ENCODE measurements at regions of chrX and their contacts with region 1.

Region 1: DNA sequence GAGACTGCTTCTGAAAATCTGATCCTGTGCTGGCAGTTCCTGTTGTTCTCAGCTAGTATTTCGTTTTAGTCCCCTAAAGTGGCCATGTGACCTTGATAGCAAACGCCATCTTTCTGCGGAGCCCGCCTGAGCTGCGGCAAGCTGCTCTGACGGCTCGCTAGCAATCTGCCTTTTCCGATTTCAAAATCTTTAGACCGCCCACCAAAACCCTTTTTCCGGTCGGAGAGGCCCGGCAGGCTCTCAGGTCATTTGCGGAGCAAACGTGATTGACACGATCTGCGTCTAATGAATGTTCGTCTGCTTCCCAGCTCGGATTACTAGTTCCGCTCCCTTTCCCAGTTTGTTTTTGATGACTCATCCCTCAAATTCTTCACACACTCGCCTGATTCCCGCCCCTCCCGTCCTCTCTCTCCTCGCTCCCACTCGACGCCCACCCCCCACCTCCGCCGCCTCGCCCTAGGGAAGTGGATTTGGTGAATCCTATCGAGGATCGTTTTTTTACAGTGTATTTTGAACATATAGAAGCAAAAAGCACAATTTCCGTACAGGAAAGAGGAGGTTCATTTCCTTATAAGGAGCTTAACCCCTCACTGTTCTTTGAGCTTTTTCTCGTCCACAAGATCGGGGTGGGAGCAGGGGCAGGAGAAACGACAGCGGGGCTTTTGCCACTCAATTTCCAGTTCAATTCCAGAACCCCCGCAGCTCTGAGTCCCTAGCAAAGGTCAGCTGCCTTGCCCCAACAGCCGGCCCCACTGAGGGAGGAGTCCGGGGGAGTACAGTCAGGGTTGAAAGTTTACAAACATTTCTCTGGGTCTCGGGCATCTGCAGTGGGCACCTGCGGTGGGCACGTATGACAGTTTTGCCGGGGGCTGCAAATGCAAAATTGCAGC is 37.5 kb downstream of the NLGN3 start:
- DNase-seq: peak; percentile 82 to 88 (median 83)
- H3K4me3 ChIP-seq: peak overlapping the region; percentile 40
- H3K27ac ChIP-seq: peak overlapping the region; percentile 2 to 83
- H3K4me1 ChIP-seq: peaks cover 2% of the 10 kb centered on the region
- H3K27me3 ChIP-seq: no peaks in the 10 kb centered on the region
- CTCF ChIP-seq: no peak
- EP300 ChIP-seq: no peak
- POLR2A ChIP-seq: peak; percentile 78

Region 2: DNA sequence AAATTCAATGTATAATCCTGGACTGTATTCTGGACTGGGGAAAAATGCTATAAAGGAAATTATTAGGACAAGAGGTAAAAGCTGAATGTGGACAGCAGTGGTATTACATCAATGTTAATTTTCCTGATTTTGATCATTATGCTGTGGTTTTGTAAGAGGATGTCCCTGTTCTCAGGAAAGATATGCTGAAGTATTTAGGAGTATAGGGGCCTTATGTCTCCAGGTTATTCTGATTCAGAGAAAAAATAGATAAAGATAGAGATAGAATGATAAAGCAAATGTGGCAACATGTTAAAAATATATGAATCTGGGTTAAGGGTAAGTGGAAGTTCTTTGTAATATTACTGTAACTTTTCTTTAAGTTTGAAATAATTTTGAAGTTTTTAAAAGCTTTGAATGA is 149.6 kb before region 1 on chrX:
- intact Hi-C with region 1: no loop called
- DNase-seq: no peak
- H3K4me3 ChIP-seq: no peak overlapping the region
- H3K27ac ChIP-seq: no peak overlapping the region
- H3K4me1 ChIP-seq: no peaks in the 10 kb centered on the region
- H3K27me3 ChIP-seq: no peaks in the 10 kb centered on the region
- CTCF ChIP-seq: no peak
- EP300 ChIP-seq: no peak
- POLR2A ChIP-seq: no peak

Region 3: DNA sequence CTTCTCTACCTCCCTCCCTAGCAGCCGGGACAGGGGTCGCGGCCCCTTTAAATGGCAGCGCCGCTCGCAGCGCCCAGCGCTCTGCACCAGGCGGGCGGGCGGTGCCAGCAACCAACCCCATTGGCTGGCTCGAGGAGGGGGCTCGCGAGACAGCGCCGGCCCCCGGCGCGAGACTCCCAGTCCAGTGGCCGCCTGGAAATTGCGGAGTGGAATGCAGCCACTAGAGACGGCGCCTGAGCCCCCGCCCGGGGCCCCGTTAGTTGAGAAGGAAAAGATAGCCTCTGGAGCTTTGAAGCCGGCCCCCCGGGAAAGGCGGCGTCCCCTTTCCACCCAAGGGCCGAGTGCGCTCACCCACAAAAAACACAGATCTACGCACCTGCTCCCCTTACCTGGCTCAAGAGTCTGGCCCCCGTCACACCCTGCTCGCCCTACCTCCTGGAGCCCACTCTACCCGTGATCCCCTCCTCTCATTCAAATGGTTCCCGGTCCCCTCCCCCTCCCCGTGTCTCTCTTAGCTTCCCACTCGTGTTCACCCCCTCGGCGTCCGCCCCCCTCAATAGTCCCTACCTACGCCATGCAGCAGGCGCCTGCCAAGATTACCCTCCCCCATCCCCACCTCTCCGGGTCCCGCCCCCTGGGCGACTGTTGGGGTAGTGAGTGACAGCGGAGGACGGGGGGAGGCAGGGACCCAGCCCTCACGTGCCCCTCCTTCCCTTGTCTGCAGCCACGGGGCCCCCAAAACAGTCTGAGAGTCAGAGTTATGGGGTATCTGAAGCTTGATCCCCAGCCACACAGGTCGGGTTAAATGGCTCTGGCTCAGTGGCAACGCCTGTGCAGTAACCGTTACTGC is 72.2 kb after region 1 on chrX and contains the start of gene ZMYM3:
- intact Hi-C with region 1: loop called in 1 of 4 experiments (anchors 10 kb)
- DNase-seq: peak; percentile 85 to 89 (median 86)
- H3K4me3 ChIP-seq: peak within 1 kb of the TSS; percentile 70
- H3K27ac ChIP-seq: peak within 1 kb of the TSS; percentile 50 to 84
- H3K4me1 ChIP-seq: peaks cover 6% of the 10 kb centered on the region
- H3K27me3 ChIP-seq: no peaks in the 10 kb centered on the region
- CTCF ChIP-seq: no peak
- EP300 ChIP-seq: no peak
- POLR2A ChIP-seq: no peak
- total RNA-seq, gene ZMYM3: 17.2 to 75.8 (median 66.5) TPM